CD4-positive, alpha-beta memory T cell (primary cell): ENCODE measurements at regions of chr3 and their contacts with region 1.

Region 1: DNA sequence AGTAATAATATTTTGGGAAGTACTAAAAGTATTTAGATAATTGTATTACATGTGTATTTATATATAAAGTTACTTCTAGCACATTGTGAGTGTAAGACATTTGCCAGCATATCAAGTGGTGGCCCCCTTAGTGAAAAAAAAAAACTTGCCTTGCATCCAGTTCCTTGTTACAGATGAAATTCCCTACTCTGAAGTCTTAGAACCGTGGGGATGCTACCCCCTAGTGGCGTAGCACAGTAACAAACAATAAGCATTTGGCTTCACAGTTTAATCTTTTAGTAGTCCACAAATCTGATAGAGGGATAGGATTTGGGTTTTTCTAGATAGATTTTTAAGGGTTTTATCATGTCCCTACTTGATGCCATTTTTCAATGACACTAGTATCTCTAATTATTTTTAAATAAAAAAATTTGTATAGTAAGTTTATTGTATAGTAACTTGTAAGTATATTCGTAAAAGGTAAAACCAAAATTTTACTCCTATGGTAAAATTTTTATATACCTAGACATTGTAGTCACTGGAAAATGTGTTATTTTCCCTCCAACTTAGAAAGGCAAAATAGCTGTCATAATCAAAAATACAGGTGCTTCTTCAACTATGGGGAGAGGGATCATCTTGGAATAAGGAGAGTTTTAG is 14.3 kb downstream of the SMC4 start:
- DNase-seq: peak; percentile 68 to 74 (median 70)
- H3K4me3 ChIP-seq: no peak overlapping the region
- H3K4me3 Mint-ChIP-seq: no peak overlapping the region
- H3K27ac ChIP-seq: no peak overlapping the region
- H3K27ac Mint-ChIP-seq: peak overlapping the region in 3 of 7 donors; percentile 17 to 64 (median 33)
- H3K4me1 ChIP-seq: peaks cover 13% of the 10 kb centered on the region
- H3K4me1 Mint-ChIP-seq: peaks cover 10 to 21% (median 16%) of the 10 kb centered on the region in 4 donors
- H3K27me3 ChIP-seq: no peaks in the 10 kb centered on the region
- H3K27me3 Mint-ChIP-seq: no peaks in the 10 kb centered on the region

Region 2: GRCh38 chr3:159988617-159989271 is 425.0 kb before region 1 on chr3 and contains the start of gene IL12A:
- CTCF ChIA-PET with region 1: interaction called, 63 read pairs
- POLR2A ChIA-PET with region 1: no interaction called
- intact Hi-C with region 1: loop called (anchors 1 kb)
- DNase-seq: peak; percentile 77 to 80 (median 79)
- H3K4me3 ChIP-seq: peak within 1 kb of the TSS; percentile 64 to 66
- H3K4me3 Mint-ChIP-seq: peak within 1 kb of the TSS; percentile 81 to 86 (median 84)
- H3K27ac ChIP-seq: peak within 1 kb of the TSS; percentile 10
- H3K27ac Mint-ChIP-seq: peak within 1 kb of the TSS in 6 of 7 donors; percentile 20 to 88 (median 76)
- H3K4me1 ChIP-seq: peaks cover 12% of the 10 kb centered on the region
- H3K4me1 Mint-ChIP-seq: peaks cover 9 to 47% (median 17%) of the 10 kb centered on the region in 4 donors
- H3K27me3 ChIP-seq: no peaks in the 10 kb centered on the region
- H3K27me3 Mint-ChIP-seq: no peaks in the 10 kb centered on the region
- total RNA-seq, gene IL12A: 0.44 to 0.53 TPM

Region 3: DNA sequence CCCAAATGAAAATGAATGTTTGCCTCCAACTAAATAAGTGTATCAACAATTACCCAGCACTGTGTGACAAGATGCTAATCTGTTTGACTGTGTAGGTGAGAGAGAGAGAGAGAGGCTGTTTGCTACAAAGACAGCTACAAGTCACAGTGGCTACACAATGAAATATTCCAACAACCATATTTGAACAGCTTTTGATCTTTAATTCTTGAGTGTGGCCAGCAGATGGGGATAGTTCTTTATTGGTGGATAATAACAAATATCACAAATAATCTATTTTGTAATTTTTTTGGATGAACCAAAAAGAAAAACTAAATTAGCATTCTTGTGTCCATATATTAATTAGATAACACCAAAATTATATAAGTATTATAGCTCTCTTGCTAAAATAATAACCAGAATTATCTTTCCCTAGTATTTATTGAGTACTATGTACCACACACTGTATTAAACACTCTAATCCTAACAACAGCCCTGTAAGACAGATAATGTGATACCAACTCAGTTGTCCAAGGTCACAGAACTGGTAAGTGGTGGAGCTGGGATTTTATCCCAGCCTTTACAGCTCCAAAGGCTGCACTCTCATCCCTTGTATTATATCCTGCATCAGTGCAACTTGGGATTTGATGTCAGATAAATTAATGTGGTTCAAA is 250.4 kb before region 1 on chr3:
- CTCF ChIA-PET with region 1: interaction called, 34 read pairs
- POLR2A ChIA-PET with region 1: no interaction called
- intact Hi-C with region 1: loop called (anchors 1 kb)
- DNase-seq: peak in 3 of 5 donors; percentile 2 to 17 (median 14)
- H3K4me3 ChIP-seq: no peak overlapping the region
- H3K4me3 Mint-ChIP-seq: no peak overlapping the region
- H3K27ac ChIP-seq: no peak overlapping the region
- H3K27ac Mint-ChIP-seq: no peak overlapping the region
- H3K4me1 ChIP-seq: no peaks in the 10 kb centered on the region
- H3K4me1 Mint-ChIP-seq: peaks cover 0 to 2% (median 0%) of the 10 kb centered on the region in 4 donors
- H3K27me3 ChIP-seq: no peaks in the 10 kb centered on the region
- H3K27me3 Mint-ChIP-seq: peaks cover 3 to 8% of the 10 kb centered on the region in 2 donors

Region 4: DNA sequence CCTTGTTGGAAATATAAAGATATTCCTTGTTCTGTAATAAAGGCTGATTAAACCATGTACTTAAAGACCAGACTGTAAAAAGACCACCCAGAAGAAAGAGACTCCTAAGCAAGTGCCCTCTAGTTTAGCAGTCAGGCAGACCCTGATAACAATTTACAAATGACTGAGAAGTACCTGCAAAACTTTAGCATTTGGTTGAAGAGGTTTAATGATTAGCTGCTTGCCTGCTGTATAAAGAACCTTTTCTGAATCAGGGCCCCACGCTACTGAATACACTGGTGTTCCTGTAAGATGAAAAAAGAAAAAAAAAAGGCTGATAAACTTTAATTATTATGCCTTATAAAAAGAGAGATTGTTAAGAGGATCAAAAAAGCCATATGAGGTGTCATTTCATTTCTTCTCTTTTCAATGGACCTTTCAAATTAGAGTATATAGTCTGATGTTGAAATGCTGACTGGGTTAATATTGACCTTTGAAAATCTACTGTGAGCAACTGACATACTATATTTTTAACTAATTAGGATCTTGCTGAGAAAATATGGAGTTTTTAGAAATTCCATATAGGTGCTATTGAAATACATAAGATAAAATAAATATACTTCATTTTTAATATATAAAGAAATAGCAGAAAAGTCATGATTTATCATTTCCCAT is 47.7 kb before region 1 on chr3:
- CTCF ChIA-PET with region 1: no interaction called
- POLR2A ChIA-PET with region 1: no interaction called
- intact Hi-C with region 1: no loop called
- DNase-seq: no peak
- H3K4me3 ChIP-seq: no peak overlapping the region
- H3K4me3 Mint-ChIP-seq: no peak overlapping the region
- H3K27ac ChIP-seq: no peak overlapping the region
- H3K27ac Mint-ChIP-seq: no peak overlapping the region
- H3K4me1 ChIP-seq: peaks cover 19% of the 10 kb centered on the region
- H3K4me1 Mint-ChIP-seq: peaks cover 13 to 25% (median 19%) of the 10 kb centered on the region in 4 donors
- H3K27me3 ChIP-seq: no peaks in the 10 kb centered on the region
- H3K27me3 Mint-ChIP-seq: no peaks in the 10 kb centered on the region

Region 5: DNA sequence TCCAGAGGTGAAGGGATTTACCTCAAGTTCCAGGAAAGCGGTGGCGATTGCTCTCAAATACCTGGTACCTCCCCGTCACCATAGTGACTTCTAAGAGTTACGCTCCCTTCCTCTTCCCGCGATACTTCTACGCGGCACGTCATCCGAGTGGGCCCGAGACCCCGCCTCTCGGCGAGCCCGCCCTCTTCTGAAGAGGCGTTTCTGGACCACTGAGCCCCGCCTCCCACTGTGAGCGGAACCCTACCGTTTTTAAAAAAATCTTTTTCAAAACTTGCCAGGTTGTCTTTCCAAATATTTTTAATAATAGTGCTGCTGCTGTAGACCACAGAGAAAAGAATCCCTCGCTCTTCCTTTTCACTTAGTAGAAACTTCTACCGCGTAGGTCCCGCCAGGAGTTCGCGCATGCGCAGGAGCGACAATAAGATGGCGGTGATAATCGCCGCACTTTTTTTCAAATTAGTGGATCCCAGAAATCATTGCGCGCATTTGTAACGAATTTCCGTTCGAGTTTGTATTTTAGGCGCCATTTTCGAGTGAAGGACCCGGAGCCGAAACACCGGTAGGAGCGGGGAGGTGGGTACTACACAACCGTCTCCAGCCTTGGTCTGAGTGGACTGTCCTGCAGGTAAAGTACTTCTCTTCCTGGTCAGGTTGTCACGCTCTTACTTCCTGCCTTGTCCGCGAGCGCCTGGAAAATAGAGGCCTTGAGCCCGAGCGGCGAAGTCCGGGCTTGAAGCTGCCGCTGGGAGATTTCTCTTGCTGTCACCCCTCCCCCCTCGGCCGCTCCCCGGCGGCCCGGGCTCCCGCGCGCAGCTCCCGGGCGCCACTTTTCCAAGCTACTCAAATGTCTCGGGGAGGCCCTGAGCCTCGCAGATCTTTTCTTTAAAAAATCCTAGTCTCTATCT is 14.4 kb before region 1 on chr3 and contains the starts of genes IFT80 and SMC4:
- CTCF ChIA-PET with region 1: interaction called, 21 read pairs
- POLR2A ChIA-PET with region 1: interaction called, 9 read pairs
- intact Hi-C with region 1: no loop called
- DNase-seq: peak; percentile 96 to 97 (median 97)
- H3K4me3 ChIP-seq: peak within 1 kb of the TSS; percentile 68 to 86
- H3K4me3 Mint-ChIP-seq: peak within 1 kb of the TSS; percentile 91 to 100 (median 98)
- H3K27ac ChIP-seq: peak within 1 kb of the TSS; percentile 91
- H3K27ac Mint-ChIP-seq: peak within 1 kb of the TSS; percentile 97 to 100 (median 99)
- H3K4me1 ChIP-seq: peaks cover 37% of the 10 kb centered on the region
- H3K4me1 Mint-ChIP-seq: peaks cover 32 to 53% (median 40%) of the 10 kb centered on the region in 4 donors
- H3K27me3 ChIP-seq: no peaks in the 10 kb centered on the region
- H3K27me3 Mint-ChIP-seq: no peaks in the 10 kb centered on the region
- total RNA-seq, gene IFT80: 34.0 to 38.8 TPM
- total RNA-seq, gene SMC4: 72.0 to 74.3 TPM

Region 6: DNA sequence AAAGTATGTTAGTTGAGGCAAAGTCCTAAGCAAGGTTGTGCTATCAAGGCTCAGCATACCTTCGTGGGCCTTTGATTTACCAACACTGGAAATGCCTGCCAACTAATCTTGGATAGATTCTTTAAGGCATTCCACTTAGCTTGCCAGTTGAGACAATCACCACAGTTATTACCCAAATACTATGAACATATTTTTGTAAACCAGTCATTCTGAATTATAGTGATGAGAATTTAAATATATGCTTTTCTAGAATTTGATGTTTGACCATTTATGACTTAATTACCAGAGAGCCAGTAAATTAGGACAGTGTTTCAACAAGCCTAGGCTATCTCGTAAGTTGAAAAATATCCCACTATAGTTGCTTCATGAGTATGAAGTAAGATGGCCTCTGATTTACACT is 20.3 kb after region 1 on chr3:
- CTCF ChIA-PET with region 1: interaction called, 10 read pairs
- POLR2A ChIA-PET with region 1: no interaction called
- intact Hi-C with region 1: no loop called
- DNase-seq: no peak
- H3K4me3 ChIP-seq: no peak overlapping the region
- H3K4me3 Mint-ChIP-seq: no peak overlapping the region
- H3K27ac ChIP-seq: no peak overlapping the region
- H3K27ac Mint-ChIP-seq: no peak overlapping the region
- H3K4me1 ChIP-seq: peaks cover 34% of the 10 kb centered on the region
- H3K4me1 Mint-ChIP-seq: peaks cover 24 to 41% (median 34%) of the 10 kb centered on the region in 4 donors
- H3K27me3 ChIP-seq: no peaks in the 10 kb centered on the region
- H3K27me3 Mint-ChIP-seq: no peaks in the 10 kb centered on the region